Gastrocnemius medialis (tissue), 4 donors: ENCODE measurements at regions of chr9 and their contacts with region 1.

Region 1: GRCh38 chr9:75788006-75788634 is 102.4 kb upstream of the PCSK5 start:
- DNase-seq: peak in 1 of 2 donors; percentile 25
- ATAC-seq: peak; percentile 47 to 66
- H3K4me3 ChIP-seq: no peak overlapping the region
- H3K27ac ChIP-seq: peak overlapping the region in 1 of 4 donors; percentile 17
- H3K4me1 ChIP-seq: no peaks in the 10 kb centered on the region
- H3K27me3 ChIP-seq: no peaks in the 10 kb centered on the region
- CTCF ChIP-seq: no peak
- POLR2A ChIP-seq: no peak

Region 2: GRCh38 chr9:75683591-75683990 is 104.5 kb before region 1 on chr9:
- in situ Hi-C with region 1: loop called in 1 of 4 experiments (anchors 25 kb)
- intact Hi-C with region 1: no loop called
- DNase-seq: no peak
- ATAC-seq: no peak
- H3K4me3 ChIP-seq: no peak overlapping the region
- H3K27ac ChIP-seq: no peak overlapping the region
- H3K4me1 ChIP-seq: no peaks in the 10 kb centered on the region
- H3K27me3 ChIP-seq: no peaks in the 10 kb centered on the region
- CTCF ChIP-seq: no peak
- POLR2A ChIP-seq: no peak

Region 3: DNA sequence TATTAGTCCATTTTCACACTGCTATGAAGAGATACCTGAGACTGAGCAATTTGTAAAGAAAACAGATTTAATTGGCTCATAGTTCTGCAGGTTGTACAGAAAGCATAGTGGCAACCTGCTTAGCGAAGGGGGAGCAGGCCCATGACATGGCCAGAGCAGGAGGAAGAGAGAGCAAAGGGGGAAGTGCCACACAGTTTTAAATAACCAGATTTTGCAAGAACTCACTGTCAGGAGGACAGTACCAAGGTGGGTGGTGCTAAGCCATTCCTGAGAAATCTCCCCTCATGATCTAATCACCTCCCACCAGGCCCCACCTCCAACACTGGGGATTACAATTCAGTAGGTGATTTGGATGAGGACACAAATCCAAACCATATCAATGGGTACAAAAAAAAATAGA is 85.6 kb after region 1 on chr9:
- in situ Hi-C with region 1: no loop called
- intact Hi-C with region 1: no loop called
- DNase-seq: no peak
- ATAC-seq: no peak
- H3K4me3 ChIP-seq: no peak overlapping the region
- H3K27ac ChIP-seq: no peak overlapping the region
- H3K4me1 ChIP-seq: no peaks in the 10 kb centered on the region
- H3K27me3 ChIP-seq: no peaks in the 10 kb centered on the region
- CTCF ChIP-seq: no peak
- POLR2A ChIP-seq: no peak